SK-N-SH (cell line): ENCODE measurements at regions of chr1 and their contacts with region 1.

Region 1: GRCh38 chr1:10507111-10507879 is 32.5 kb downstream of the PEX14 start:
- DNase-seq: peak; percentile 83
- H3K4me3 ChIP-seq: no peak overlapping the region; a peak in 1 of 4 replicates
- H3K27ac ChIP-seq: no peak overlapping the region
- H3K4me1 ChIP-seq: peaks cover 27 to 39% of the 10 kb centered on the region in 2 experiments
- H3K27me3 ChIP-seq: no peaks in the 10 kb centered on the region
- CTCF ChIP-seq: peak; percentile 87
- EP300 ChIP-seq: no peak
- RAD21 ChIP-seq: peak; percentile 90

Region 2: DNA sequence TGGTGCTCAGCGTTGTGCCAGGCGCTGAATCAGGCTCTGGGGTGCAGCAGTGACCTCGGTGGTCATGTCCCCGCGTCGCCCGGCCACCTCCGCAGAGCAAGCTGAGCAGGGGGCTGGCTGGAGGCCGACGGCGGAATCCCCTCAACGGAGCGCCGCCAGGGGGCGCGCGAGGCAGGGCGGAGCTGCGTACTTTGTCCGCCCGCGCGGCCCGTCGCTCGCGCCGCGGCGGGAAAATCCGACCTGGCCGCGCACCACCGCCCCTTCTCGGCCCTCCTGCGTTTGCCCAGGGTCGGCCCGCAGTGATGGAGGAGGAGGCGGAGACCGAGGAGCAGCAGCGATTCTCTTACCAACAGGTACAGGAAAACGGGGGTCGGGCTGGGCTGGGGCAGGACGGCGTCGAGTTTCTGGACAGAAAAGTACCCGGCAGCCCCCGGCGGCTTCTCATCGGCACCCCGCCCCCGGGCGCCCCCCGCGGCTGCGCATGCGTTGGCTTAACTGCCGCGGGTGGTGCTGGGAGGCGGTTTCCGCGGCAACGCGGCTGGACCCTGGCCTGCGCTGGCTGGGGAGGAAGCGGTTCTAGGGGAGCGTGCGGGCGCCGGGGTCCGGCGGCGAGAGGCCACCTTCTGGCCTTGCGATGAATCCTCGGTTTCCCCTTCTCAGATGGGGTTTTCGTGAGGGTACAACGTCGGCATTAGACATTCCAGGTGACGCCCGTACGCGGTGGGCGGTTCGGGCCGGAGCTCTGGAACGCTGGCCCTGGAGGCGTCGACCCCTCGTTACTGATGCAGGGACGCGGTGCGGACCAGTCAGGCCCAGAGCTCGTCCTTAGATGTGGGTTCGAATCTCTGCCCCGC is 76.9 kb before region 1 on chr1 and contains the start of gene CENPS:
- CTCF ChIA-PET with region 1: interaction called, 18 read pairs
- POLR2A ChIA-PET with region 1: no interaction called
- DNase-seq: peak; percentile 98
- H3K4me3 ChIP-seq: peak within 1 kb of the TSS; percentile 68 to 82
- H3K27ac ChIP-seq: peak within 1 kb of the TSS; percentile 67 to 85
- H3K4me1 ChIP-seq: peaks cover 3 to 9% of the 10 kb centered on the region in 2 experiments; a peak in 1 of 4 replicates
- H3K27me3 ChIP-seq: no peaks in the 10 kb centered on the region
- CTCF ChIP-seq: peak; percentile 77
- EP300 ChIP-seq: no peak
- RAD21 ChIP-seq: peak; percentile 63
- polyA plus RNA-seq, gene CENPS: 16.6 and 20.0 TPM in 2 replicates

Region 3: GRCh38 chr1:10522322-10522860 is 15.1 kb after region 1 on chr1:
- CTCF ChIA-PET with region 1: interaction called, 28 read pairs
- POLR2A ChIA-PET with region 1: no interaction called
- DNase-seq: no peak
- H3K4me3 ChIP-seq: no peak overlapping the region
- H3K27ac ChIP-seq: no peak overlapping the region
- H3K4me1 ChIP-seq: peaks cover 17% of the 10 kb centered on the region in 2 experiments; a peak in 3 of 4 replicates
- H3K27me3 ChIP-seq: no peaks in the 10 kb centered on the region
- CTCF ChIP-seq: no peak
- EP300 ChIP-seq: no peak
- RAD21 ChIP-seq: no peak

Region 4: GRCh38 chr1:10796019-10796944 is 289.0 kb after region 1 on chr1 and contains the start of gene CASZ1:
- CTCF ChIA-PET with region 1: interaction called, 19 read pairs
- POLR2A ChIA-PET with region 1: no interaction called
- DNase-seq: peak; percentile 99
- H3K4me3 ChIP-seq: peak within 1 kb of the TSS; percentile 52 to 67
- H3K27ac ChIP-seq: no peak within 1 kb of the TSS
- H3K4me1 ChIP-seq: peaks cover 3 to 18% of the 10 kb centered on the region in 2 experiments; a peak in 2 of 4 replicates
- H3K27me3 ChIP-seq: peaks cover 53% of the 10 kb centered on the region
- CTCF ChIP-seq: no peak
- EP300 ChIP-seq: 0 out of 4 replicates have a peak, but pooled peaks have one; percentile 34 to 37
- RAD21 ChIP-seq: no peak; the same call in 1 of the 2 replicates
- polyA plus RNA-seq, gene CASZ1: 0.37 and 0.51 TPM in 2 replicates

Region 5: GRCh38 chr1:10873189-10873588 is 365.9 kb after region 1 on chr1:
- CTCF ChIA-PET with region 1: interaction called, 25 read pairs
- POLR2A ChIA-PET with region 1: no interaction called
- DNase-seq: no peak
- H3K4me3 ChIP-seq: no peak overlapping the region
- H3K27ac ChIP-seq: no peak overlapping the region
- H3K4me1 ChIP-seq: peaks cover 0 to 2% of the 10 kb centered on the region in 2 experiments; a peak in 1 of 4 replicates
- H3K27me3 ChIP-seq: no peaks in the 10 kb centered on the region
- CTCF ChIP-seq: no peak
- EP300 ChIP-seq: no peak
- RAD21 ChIP-seq: no peak

Region 6: GRCh38 chr1:10941891-10942541 is 434.7 kb after region 1 on chr1:
- CTCF ChIA-PET with region 1: interaction called, 12 read pairs
- POLR2A ChIA-PET with region 1: no interaction called
- DNase-seq: peak; percentile 92
- H3K4me3 ChIP-seq: peak overlapping the region in 1 of 2 experiments; percentile 51; a peak in 2 of 4 replicates
- H3K27ac ChIP-seq: no peak overlapping the region
- H3K4me1 ChIP-seq: peaks cover 0 to 55% of the 10 kb centered on the region in 2 experiments; a peak in 3 of 4 replicates
- H3K27me3 ChIP-seq: no peaks in the 10 kb centered on the region
- CTCF ChIP-seq: peak; percentile 88
- EP300 ChIP-seq: no peak
- RAD21 ChIP-seq: peak; percentile 80